ENCODE measurements at regions of chr9 and their contacts with region 1.

Region 1: GRCh38 chr9:122810306-122810946 is 10.5 kb downstream of the OR1K1 start:
- DNase-seq: peak; percentile 71 to 90
- ATAC-seq: peak; percentile 84
- H3K4me3 ChIP-seq: no peak overlapping the region
- H3K27ac ChIP-seq: no peak overlapping the region
- H3K4me1 ChIP-seq: no peaks in the 10 kb centered on the region
- H3K27me3 ChIP-seq: no peaks in the 10 kb centered on the region

Region 2: GRCh38 chr9:122107291-122107805 is 703.1 kb before region 1 on chr9:
- intact Hi-C with region 1: loop called in 1 of 2 experiments (anchors 10 kb)
- DNase-seq: peak in 1 of 2 donors; percentile 70
- ATAC-seq: no peak
- H3K4me3 ChIP-seq: no peak overlapping the region
- H3K27ac ChIP-seq: no peak overlapping the region
- H3K4me1 ChIP-seq: no peaks in the 10 kb centered on the region
- H3K27me3 ChIP-seq: no peaks in the 10 kb centered on the region

Region 3: DNA sequence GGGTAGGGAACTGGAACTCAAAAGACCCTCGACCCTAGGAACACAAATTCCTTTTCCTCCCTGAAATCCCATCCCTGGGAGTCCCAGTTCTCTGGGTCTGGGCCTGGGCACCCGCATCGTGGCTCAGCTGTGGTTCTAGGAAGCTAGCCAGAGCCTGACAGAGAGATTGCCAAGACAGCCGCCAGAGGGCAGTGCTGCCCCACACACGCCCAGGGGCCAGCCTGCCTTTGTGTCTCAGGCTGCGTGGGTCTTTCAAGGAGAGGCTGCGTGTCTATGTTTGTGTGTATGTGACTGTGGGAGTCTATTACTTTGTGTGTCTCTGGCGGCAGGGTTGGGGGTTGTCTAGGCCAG is 685.3 kb before region 1 on chr9:
- intact Hi-C with region 1: loop called (anchors 10 kb)
- DNase-seq: peak; percentile 85 to 93
- ATAC-seq: peak; percentile 80
- H3K4me3 ChIP-seq: no peak overlapping the region
- H3K27ac ChIP-seq: no peak overlapping the region
- H3K4me1 ChIP-seq: no peaks in the 10 kb centered on the region
- H3K27me3 ChIP-seq: no peaks in the 10 kb centered on the region

Region 4: GRCh38 chr9:122350638-122351355 is 459.6 kb before region 1 on chr9:
- intact Hi-C with region 1: loop called in 1 of 2 experiments (anchors 5 kb)
- DNase-seq: peak; percentile 87 to 94
- ATAC-seq: peak; percentile 86
- H3K4me3 ChIP-seq: no peak overlapping the region
- H3K27ac ChIP-seq: no peak overlapping the region
- H3K4me1 ChIP-seq: no peaks in the 10 kb centered on the region
- H3K27me3 ChIP-seq: no peaks in the 10 kb centered on the region

Region 5: DNA sequence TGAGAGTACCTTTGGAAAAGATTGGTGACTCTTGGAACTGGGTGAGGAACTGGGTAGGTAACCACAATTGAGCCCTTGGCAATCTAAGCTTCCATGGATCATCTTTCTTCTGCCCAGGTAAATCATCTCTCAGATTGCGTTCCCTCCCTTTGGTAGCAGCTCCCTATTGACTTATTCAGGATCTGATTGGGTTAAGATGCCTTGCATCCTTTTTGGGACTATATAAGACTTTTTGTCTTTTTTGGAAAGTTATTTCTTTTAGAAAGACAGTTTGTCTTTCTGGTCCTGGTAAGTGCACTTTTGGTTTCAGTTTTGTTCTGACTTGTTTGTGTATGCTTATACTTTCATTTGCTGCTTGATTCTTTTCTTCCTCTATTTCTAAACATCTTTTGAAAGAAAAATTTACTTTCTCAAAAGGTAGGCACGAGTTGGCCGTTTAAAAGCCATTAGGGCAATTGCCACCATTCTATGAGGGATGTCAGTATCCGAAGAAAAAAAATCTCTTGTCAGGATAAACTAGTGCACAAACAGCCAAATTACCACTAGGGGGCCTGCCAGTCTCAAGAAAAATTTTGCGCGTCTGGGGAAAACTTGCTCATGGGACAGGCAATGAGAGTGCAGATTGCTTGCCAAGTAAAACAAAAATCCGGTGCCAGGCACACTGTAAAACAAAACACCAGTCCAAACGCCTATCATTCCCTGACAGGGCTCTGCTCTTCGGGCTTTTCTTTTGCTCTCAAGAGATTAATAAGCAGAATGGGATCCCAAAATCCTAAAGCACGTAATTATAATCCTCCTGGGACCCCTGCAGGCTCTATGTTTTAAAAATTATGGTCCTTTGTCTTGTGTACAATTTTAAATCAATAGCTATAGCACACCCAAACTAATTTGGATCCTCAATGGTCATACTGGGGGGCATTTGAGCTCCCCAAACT is 345.5 kb before region 1 on chr9:
- intact Hi-C with region 1: loop called (anchors 2 kb)
- DNase-seq: peak; percentile 76 to 78
- ATAC-seq: peak; percentile 84
- H3K4me3 ChIP-seq: peak overlapping the region; percentile 26 to 38
- H3K27ac ChIP-seq: no peak overlapping the region
- H3K4me1 ChIP-seq: no peaks in the 10 kb centered on the region
- H3K27me3 ChIP-seq: no peaks in the 10 kb centered on the region